ENCODE measurements at regions of chrX and their contacts with region 1.

Region 1: DNA sequence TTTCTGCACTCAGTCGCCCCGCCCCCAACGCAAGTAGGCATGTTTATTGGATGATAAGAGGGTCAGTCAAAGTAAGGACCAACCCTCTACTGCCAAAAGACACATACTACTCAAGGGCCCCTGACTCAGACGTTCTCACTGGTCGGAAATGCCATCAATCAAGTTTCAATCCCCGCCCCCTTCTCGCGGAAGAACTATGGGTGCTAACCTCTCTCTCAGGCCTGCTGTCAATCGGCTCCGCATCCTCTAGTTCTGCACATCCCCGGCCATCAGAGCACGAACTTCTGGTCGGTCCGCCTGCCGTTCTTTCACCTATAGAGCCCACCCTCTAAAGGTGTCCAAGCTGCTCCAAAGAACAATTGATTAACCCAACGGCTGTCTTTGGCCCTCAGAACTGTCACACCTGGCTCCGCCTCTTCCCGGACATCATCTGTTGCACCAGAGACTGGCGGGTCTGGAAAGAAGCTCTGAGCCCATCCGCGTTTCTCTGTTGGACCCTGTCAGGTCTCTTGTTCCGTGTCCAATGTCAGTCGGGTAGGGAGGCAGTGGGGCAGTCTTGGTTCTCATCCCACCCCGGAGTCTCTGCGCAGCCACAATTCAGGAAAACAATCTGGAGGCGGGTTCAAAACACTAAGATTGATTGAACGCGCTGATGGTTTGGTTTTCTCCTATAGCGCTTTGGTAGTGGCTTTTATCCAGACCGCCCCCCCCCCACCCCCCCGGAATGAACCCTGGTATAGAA is 15.2 kb downstream of the NDUFB11 start:
- H3K4me3 Mint-ChIP-seq: peak overlapping the region; percentile 95
- H3K27ac Mint-ChIP-seq: peak overlapping the region; percentile 98
- H3K4me1 Mint-ChIP-seq: no peaks in the 10 kb centered on the region
- H3K27me3 Mint-ChIP-seq: no peaks in the 10 kb centered on the region

Region 2: DNA sequence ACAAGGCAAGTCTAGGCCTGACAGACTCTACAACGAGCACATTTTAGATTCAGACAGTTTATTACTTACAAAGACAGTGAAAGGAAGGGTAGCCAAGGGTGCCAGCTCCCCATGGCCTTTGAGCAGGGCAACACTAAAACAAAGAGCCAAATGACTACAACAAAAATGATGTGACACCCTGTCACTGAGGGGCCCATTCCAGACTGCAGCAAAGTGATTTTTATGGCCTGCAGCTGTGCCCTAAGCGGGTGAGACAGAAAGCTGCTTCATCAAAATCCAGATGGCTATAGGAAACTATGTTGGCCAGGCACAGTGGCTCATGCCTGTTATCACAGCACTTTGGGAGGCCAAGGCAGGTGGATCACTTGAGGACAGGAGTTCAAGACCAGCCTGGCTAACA is 305.8 kb before region 1 on chrX:
- intact Hi-C with region 1: no loop called
- H3K4me3 Mint-ChIP-seq: no peak overlapping the region
- H3K27ac Mint-ChIP-seq: no peak overlapping the region
- H3K4me1 Mint-ChIP-seq: peaks cover 5% of the 10 kb centered on the region
- H3K27me3 Mint-ChIP-seq: no peaks in the 10 kb centered on the region

Region 3: DNA sequence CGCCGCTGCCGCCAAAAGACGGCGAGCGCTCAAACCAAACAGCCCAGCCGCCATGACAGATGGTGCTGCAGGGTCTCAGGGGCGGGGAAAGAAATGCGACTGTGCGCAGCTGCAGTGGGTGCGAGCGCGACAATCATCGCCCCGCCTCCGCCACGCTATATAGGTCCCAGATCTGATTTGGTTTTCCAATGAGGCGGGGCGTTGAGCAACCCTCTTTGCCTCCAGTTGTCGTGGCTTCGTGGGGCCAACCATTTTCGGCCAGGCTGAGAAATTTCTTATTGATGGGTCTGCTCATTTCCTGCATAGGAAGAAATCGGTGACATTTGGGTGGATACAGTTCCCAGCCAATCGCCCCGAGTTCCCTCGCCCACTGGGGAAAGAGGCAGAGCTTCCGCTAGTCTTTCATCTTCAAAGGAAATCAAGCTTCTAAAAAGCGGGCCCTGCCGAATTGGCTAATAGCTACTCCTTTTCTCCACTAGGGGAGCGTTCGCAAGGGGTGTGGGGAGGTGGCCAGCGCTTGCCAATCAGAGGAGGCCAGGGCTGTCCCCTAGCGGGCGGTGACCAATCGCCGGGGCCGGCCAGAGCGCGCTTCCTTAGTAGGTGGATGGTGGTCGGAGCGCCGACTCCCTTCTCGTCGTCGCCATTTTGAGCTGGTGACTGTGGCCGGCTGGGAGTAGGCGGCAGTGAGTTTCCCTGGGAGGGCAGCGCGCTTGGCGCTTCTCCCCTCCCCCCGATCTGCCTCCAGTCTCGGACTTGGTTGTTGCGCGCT is 15.5 kb after region 1 on chrX and contains the starts of genes NDUFB11 and RBM10:
- intact Hi-C with region 1: loop called (anchors 2 kb)
- H3K4me3 Mint-ChIP-seq: peak within 1 kb of the TSS; percentile 97
- H3K27ac Mint-ChIP-seq: peak within 1 kb of the TSS; percentile 99
- H3K4me1 Mint-ChIP-seq: peaks cover 36% of the 10 kb centered on the region
- H3K27me3 Mint-ChIP-seq: no peaks in the 10 kb centered on the region

Region 4: DNA sequence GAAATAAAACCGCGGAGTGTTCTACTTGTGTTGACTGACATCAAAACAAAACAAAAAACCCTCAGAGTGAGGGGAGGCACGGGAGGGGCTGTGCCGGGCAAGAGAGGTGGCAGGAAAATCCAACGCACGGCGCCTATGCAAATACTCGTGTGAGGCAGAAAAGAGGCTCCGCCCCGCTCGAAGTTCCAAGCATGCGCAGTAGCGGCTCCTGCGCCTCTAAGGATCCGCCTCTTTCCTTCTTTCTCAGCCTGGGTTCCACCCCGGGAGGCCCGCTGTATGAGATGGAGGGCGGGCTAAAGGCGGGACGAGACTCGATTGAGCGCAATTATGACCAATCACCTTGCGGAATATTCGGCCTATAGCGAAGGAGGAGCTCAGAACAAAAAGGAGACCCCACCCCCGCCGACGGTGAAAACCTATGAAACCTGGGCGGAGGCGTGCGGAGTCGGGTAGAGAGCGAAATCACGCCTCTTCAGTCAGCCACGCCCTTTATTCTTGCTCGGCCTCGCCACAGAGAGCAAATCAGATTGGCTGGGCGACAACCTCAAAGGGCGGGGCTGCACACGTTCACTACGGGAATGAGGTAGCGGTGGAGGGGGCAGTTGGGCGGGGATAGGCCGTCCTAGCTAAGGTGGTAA is 88.4 kb after region 1 on chrX:
- intact Hi-C with region 1: no loop called
- H3K4me3 Mint-ChIP-seq: peak overlapping the region; percentile 82
- H3K27ac Mint-ChIP-seq: peak overlapping the region; percentile 92
- H3K4me1 Mint-ChIP-seq: peaks cover 65% of the 10 kb centered on the region
- H3K27me3 Mint-ChIP-seq: no peaks in the 10 kb centered on the region